ENCODE measurements at regions of chr4 and their contacts with region 1.

Region 1: GRCh38 chr4:74376888-74377483 is 12.0 kb downstream of the EREG start:
- DNase-seq: no peak
- ATAC-seq: peak; percentile 78 to 88
- H3K4me3 ChIP-seq: no peak overlapping the region
- H3K27ac ChIP-seq: no peak overlapping the region
- H3K4me1 ChIP-seq: no peaks in the 10 kb centered on the region
- H3K27me3 ChIP-seq: no peaks in the 10 kb centered on the region
- CTCF ChIP-seq: peak; percentile 65

Region 2: GRCh38 chr4:74098450-74098994 is 278.5 kb before region 1 on chr4:
- intact Hi-C with region 1: no loop called
- DNase-seq: peak; percentile 52
- ATAC-seq: peak in 1 of 2 donors; percentile 0
- H3K4me3 ChIP-seq: peak overlapping the region; percentile 55
- H3K27ac ChIP-seq: peak overlapping the region; percentile 85
- H3K4me1 ChIP-seq: peaks cover 29% of the 10 kb centered on the region
- H3K27me3 ChIP-seq: no peaks in the 10 kb centered on the region
- CTCF ChIP-seq: no peak

Region 3: DNA sequence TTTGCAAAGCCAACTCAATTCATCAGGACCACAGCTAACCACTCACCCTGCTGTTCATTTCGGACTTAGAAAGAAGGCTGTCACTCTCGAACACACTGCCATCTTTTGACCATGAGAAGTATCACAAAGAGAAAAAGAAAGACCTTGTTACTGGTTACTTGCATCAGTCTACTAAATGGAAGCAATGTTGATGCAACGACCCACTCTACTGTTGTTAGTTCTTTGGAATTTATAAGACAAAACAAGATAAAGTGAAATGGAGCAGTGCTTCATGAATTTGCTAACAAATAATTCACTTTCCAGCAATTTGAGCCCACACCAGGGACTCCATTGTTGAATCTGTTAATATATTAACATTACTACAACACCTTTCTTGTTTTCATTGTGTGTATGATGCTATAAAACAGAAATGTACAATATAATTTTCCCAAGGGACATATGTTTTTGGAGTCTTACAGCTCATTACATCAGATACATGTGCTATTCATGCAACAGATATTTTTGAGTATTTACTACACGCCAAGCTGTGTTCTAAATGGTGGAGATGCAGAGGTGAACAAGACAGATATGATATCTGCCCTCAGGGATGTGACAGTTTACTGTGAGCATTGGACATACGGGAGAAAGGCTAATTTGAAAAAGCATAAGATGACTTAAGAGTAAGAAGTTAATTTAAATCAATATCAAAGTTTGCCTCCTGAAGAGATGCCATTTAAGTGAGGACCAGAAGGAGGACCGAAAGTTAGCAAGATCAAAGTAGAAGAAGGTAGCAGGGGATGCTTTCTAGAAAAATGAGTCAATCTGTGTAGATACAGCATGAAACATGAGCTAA is 155.2 kb after region 1 on chr4:
- intact Hi-C with region 1: loop called (anchors 5 kb)
- DNase-seq: no peak
- ATAC-seq: peak; percentile 79 to 82
- H3K4me3 ChIP-seq: no peak overlapping the region
- H3K27ac ChIP-seq: no peak overlapping the region
- H3K4me1 ChIP-seq: no peaks in the 10 kb centered on the region
- H3K27me3 ChIP-seq: no peaks in the 10 kb centered on the region
- CTCF ChIP-seq: peak; percentile 56